ENCODE measurements at regions of chr5 and their contacts with region 1.

Region 1: GRCh38 chr5:100890461-100891008 is 12.5 kb downstream of the ST8SIA4 start:
- DNase-seq: peak; percentile 34
- H3K4me3 ChIP-seq: peak overlapping the region; percentile 60
- H3K27ac ChIP-seq: peak overlapping the region; percentile 96
- H3K4me1 ChIP-seq: peaks cover 84% of the 10 kb centered on the region
- CTCF ChIP-seq: no peak

Region 2: GRCh38 chr5:100777680-100778281 is 112.8 kb before region 1 on chr5:
- CTCF ChIA-PET with region 1: interaction called, 6 read pairs
- POLR2A ChIA-PET with region 1: interaction called, 290 read pairs
- intact Hi-C with region 1: no loop called
- DNase-seq: peak; percentile 65
- H3K4me3 ChIP-seq: peak overlapping the region; percentile 28
- H3K27ac ChIP-seq: no peak overlapping the region
- H3K4me1 ChIP-seq: peaks cover 78% of the 10 kb centered on the region
- CTCF ChIP-seq: no peak

Region 3: DNA sequence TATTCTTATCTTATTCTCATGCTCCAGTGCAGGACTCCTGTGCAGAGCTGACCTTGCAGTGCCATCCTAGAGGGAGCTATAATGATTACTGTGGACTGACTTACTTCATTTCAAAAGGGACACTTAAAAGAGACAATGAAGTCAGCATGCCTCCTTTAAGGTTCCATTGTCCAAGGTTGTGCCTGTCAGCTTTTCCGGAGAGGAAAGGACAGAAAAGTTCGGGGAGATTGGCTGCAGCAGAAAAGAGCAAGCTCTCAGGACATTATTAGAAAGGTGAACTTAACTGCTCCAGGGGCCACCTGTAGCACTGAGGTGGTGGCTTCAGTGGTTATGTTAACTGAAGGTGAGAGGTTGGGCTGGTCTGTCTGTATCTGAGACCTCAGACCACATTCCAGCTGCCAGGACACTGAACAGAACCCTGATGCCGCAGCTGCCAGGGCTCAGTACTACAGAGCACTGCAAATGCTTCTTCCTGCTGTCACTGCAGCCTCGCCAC is 100.3 kb before region 1 on chr5:
- CTCF ChIA-PET with region 1: no interaction called
- POLR2A ChIA-PET with region 1: interaction called, 128 read pairs
- intact Hi-C with region 1: no loop called
- DNase-seq: peak; percentile 74
- H3K4me3 ChIP-seq: peak overlapping the region; percentile 35
- H3K27ac ChIP-seq: peak overlapping the region; percentile 58
- H3K4me1 ChIP-seq: peaks cover 49% of the 10 kb centered on the region
- CTCF ChIP-seq: peak; percentile 80

Region 4: DNA sequence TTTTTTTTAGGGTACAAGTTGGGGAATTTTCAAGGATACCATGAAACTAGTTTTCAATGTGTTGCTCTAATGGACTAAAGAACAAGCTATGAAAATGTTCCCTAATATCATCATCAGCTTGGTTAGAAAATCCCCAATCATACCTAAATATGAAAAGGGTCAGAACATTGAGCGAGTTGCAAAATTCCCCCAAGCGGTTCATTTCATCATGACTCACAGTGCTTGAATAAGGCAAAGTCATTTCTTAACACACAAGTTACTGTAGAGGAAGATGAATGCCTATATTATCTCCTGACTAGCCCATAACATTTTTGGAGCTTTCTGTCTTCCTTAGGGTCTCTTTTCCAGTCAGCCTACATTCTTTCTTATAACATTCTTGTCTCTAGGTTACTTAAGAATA is 50.2 kb before region 1 on chr5:
- CTCF ChIA-PET with region 1: no interaction called
- POLR2A ChIA-PET with region 1: interaction called, 42 read pairs
- intact Hi-C with region 1: no loop called
- DNase-seq: peak; percentile 40
- H3K4me3 ChIP-seq: peak overlapping the region; percentile 53
- H3K27ac ChIP-seq: peak overlapping the region; percentile 45
- H3K4me1 ChIP-seq: peaks cover 34% of the 10 kb centered on the region
- CTCF ChIP-seq: no peak

Region 5: DNA sequence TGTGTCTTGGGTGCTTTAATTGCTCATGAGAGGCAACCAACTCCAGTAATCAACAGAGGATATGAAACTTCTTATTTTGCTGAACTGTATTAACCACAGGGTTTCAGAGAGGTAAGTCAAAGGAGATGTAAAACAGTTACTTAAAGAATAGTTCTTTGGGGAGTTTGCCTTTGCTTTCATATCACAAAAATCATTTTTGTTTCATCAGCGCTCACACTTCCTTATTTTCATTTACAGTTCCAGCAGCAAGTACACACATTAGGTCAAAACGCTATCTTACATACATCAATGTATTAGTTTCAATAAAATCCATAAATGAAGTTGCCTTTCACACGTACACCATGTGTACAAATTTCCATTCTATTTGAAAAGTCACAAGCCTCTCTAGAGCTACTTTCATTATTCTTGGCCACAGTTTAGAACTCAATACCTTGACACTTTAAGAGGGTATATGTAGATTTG is 37.5 kb before region 1 on chr5:
- CTCF ChIA-PET with region 1: interaction called, 3 read pairs
- POLR2A ChIA-PET with region 1: interaction called, 114 read pairs
- intact Hi-C with region 1: loop called (anchors 1 kb)
- DNase-seq: peak; percentile 91
- H3K4me3 ChIP-seq: peak overlapping the region; percentile 54
- H3K27ac ChIP-seq: peak overlapping the region; percentile 98
- H3K4me1 ChIP-seq: peaks cover 75% of the 10 kb centered on the region
- CTCF ChIP-seq: no peak

Region 6: DNA sequence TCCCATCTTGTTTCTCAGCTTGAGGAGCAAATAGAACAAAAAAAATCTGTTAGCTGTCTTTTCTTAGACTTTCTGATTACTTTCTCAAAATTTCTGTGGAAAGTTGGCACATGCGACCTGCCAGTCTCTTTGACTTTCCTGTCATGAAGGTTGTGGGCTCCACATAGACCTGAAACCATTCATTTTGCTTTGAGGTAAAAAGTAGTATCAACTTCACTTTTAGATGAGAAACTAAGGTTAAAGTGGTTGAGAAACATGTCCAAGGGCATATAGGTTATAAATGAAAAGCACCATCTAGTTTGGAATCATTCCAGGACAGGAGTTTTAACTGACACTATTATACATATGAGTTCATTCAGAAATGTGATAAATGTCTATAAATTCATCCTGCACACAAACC is 30.1 kb before region 1 on chr5:
- CTCF ChIA-PET with region 1: interaction called, 3 read pairs
- POLR2A ChIA-PET with region 1: interaction called, 114 read pairs
- intact Hi-C with region 1: no loop called
- DNase-seq: no peak
- H3K4me3 ChIP-seq: no peak overlapping the region
- H3K27ac ChIP-seq: no peak overlapping the region
- H3K4me1 ChIP-seq: peaks cover 38% of the 10 kb centered on the region
- CTCF ChIP-seq: no peak

Region 7: GRCh38 chr5:100872408-100873190 is 17.9 kb before region 1 on chr5:
- CTCF ChIA-PET with region 1: interaction called, 3 read pairs
- POLR2A ChIA-PET with region 1: interaction called, 12 read pairs
- intact Hi-C with region 1: no loop called
- DNase-seq: no peak
- H3K4me3 ChIP-seq: no peak overlapping the region
- H3K27ac ChIP-seq: no peak overlapping the region
- H3K4me1 ChIP-seq: no peaks in the 10 kb centered on the region
- CTCF ChIP-seq: no peak

Region 8: DNA sequence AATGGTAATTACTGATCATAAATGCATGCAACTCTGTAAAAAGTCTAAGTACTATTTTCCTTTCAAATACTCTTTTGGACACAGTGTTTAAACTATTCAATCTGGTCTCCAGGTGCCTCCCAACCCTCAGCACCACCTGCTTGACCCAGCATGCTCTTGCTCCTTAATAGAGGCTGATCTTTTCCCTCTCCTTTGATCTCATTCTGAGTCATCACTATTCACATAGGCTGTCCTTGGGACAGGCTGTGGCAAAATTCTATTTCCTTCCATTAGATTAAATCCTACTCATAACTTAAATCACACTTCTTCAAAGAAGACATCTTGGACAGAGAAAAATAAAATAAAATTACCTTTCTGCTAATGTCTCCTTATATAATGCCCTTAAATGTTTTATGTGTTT is 212.0 kb after region 1 on chr5:
- CTCF ChIA-PET with region 1: no interaction called
- POLR2A ChIA-PET with region 1: no interaction called
- intact Hi-C with region 1: no loop called
- DNase-seq: no peak
- H3K4me3 ChIP-seq: no peak overlapping the region
- H3K27ac ChIP-seq: no peak overlapping the region
- H3K4me1 ChIP-seq: no peaks in the 10 kb centered on the region
- CTCF ChIP-seq: no peak

Region 9: DNA sequence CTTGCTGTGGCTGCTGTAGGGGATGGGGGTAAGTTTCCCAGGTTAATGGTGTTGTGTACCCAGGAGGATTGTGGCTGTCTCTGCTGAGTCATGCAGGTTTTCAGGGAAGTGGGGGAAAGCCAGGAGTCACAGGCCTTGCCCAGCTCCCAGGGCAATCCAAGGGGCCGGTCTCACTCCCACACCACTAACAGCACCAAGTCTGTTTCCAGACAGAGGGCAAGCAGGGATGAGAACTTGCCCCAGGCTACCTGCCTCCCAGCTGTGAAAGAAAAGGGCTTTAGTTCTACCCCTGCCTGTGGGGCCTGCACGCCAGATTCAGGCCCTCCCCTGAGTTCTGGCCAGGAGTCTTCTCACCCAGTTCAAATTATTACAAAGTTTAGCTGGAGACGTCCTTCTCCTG is 592.4 kb after region 1 on chr5:
- CTCF ChIA-PET with region 1: no interaction called
- POLR2A ChIA-PET with region 1: no interaction called
- intact Hi-C with region 1: no loop called
- DNase-seq: no peak
- H3K4me3 ChIP-seq: no peak overlapping the region
- H3K27ac ChIP-seq: no peak overlapping the region
- H3K4me1 ChIP-seq: no peaks in the 10 kb centered on the region
- CTCF ChIP-seq: no peak